PC-3 (cell line): ENCODE measurements at regions of chr12 and their contacts with region 1.

Region 1: GRCh38 chr12:32230613-32230993 is 124.0 kb downstream of the BICD1 start:
- DNase-seq: no peak
- ATAC-seq: no peak
- H3K4me3 ChIP-seq: no peak overlapping the region
- H3K27ac ChIP-seq: no peak overlapping the region
- H3K4me1 ChIP-seq: no peaks in the 10 kb centered on the region
- H3K27me3 ChIP-seq: no peaks in the 10 kb centered on the region
- CTCF ChIP-seq: no peak

Region 2: GRCh38 chr12:32181498-32182175 is 49.0 kb before region 1 on chr12:
- CTCF ChIA-PET with region 1: no interaction called
- POLR2A ChIA-PET with region 1: no interaction called
- intact Hi-C with region 1: loop called (anchors 10 kb)
- DNase-seq: no peak
- ATAC-seq: no peak
- H3K4me3 ChIP-seq: no peak overlapping the region
- H3K27ac ChIP-seq: no peak overlapping the region
- H3K4me1 ChIP-seq: peaks cover 32% of the 10 kb centered on the region
- H3K27me3 ChIP-seq: no peaks in the 10 kb centered on the region
- CTCF ChIP-seq: no peak